Posterior vena cava (tissue), 2 donors: ENCODE measurements at regions of chrX and their contacts with region 1.

Region 1: GRCh38 chrX:71210819-71211218 is 12.2 kb upstream of the GJB1 start:
- DNase-seq: no peak

Region 2: DNA sequence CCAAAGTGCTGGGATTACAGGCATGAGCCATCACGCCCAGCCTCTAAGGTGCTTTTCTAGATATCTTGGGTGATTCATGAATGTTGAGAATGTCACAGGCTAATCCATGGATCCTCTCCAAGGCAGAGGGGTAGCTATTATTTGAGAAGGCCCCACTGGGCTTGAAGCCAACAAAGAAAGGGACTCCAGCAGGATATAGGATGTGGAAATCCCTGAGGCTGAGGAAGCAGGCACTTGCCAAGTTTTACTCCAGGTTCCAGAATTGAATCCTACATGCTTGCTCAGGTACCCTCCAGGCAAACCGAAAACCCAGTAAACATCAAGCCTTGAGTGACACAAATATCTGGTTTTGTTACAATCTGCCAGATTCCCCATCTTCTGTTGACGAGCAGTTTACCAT is 50.3 kb before region 1 on chrX:
- intact Hi-C with region 1: loop called in 1 of 2 experiments (anchors 2 kb)
- DNase-seq: no peak